GM13976 (cell line): ENCODE measurements at regions of chr7 and their contacts with region 1.

Region 1: GRCh38 chr7:2325162-2325561 is 10.9 kb upstream of the SNX8 start:
- DNase-seq: no peak
- CTCF ChIP-seq: no peak

Region 2: GRCh38 chr7:1210321-1210978 is 1114.7 kb before region 1 on chr7:
- in situ Hi-C with region 1: no loop called
- DNase-seq: peak; percentile 29
- CTCF ChIP-seq: no peak

Region 3: DNA sequence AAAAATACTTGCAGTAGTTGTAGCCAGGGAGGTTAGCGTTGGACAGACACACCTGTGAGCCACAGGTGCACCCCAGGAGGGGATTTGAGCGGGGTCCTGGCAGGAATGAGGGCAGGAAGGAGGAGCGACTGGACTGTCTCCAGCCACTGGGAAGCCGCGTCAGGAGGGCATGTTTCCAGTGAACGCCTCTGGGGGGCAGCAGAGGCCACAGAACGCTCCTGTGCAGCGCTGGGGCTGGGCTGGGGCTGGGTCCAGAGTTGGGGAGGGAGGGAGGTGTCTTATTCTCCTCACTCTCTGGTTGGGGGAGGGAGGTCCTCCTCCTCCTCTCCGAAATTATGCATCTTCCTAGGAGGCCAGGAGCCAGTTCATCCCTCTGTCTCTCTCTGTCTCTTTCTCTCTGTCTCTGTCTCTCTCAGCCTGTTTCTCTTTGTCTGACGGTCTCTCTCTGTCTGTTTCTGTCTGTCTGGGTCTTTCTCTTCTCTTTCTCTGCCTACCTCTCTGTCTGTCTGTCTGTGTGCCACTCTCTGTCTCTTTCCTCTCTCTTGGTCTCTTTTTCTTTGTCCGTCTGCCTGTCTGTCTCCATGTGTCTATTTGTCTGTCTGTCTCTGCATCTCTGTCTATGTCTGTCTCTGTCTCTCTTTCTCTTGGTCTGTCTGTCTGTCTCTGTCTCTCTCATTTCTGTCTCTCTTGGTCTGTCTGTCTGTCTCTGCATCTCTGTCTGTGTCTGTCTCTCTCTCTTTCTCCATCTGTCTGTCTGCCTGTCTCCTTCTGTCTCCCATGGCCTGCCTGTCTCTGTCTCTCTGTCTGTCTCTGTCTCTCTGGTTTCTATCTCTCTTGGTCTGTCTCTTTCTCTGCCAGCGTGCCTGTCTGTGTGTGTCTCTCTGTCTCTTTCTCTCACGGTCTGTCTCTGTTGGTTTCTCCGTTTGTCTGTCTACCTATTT is 745.4 kb before region 1 on chr7:
- in situ Hi-C with region 1: loop called (anchors 25 kb)
- DNase-seq: peak; percentile 86
- CTCF ChIP-seq: peak; percentile 92